Activated T-helper 1 cell treated with anti-CD3 and anti-CD28 coated beads, Interleukin-12 subunit alpha, Interleukin-12 subunit beta, Interleukin-2, Interleukin-4 antibody, amounts not matched to agents 30 ng/mL and 10 ng/mL and 1 ng/mL, durations not matched to agents 14 hours and 24 hours and 36 hours (primary cell): ENCODE measurements at regions of chr13 and their contacts with region 1.

Region 1: GRCh38 chr13:110819203-110820014 is 95.5 kb downstream of the ANKRD10 start:
- DNase-seq: peak; percentile 61
- H3K4me3 Mint-ChIP-seq: no peak overlapping the region
- H3K27ac Mint-ChIP-seq: no peak overlapping the region
- H3K4me1 Mint-ChIP-seq: peaks cover 8% of the 10 kb centered on the region
- H3K27me3 Mint-ChIP-seq: peaks cover 16% of the 10 kb centered on the region

Region 2: GRCh38 chr13:109667807-109668291 is 1151.6 kb before region 1 on chr13:
- intact Hi-C with region 1: no loop called
- DNase-seq: no peak
- H3K4me3 Mint-ChIP-seq: no peak overlapping the region
- H3K27ac Mint-ChIP-seq: no peak overlapping the region
- H3K4me1 Mint-ChIP-seq: no peaks in the 10 kb centered on the region
- H3K27me3 Mint-ChIP-seq: no peaks in the 10 kb centered on the region

Region 3: GRCh38 chr13:110244071-110244830 is 575.2 kb before region 1 on chr13:
- intact Hi-C with region 1: no loop called
- DNase-seq: no peak
- H3K4me3 Mint-ChIP-seq: no peak overlapping the region
- H3K27ac Mint-ChIP-seq: no peak overlapping the region
- H3K4me1 Mint-ChIP-seq: no peaks in the 10 kb centered on the region
- H3K27me3 Mint-ChIP-seq: peaks cover 10% of the 10 kb centered on the region

Region 4: GRCh38 chr13:110455941-110456340 is 363.5 kb before region 1 on chr13:
- intact Hi-C with region 1: loop called (anchors 1 kb)
- DNase-seq: peak; percentile 51
- H3K4me3 Mint-ChIP-seq: peak overlapping the region; percentile 7
- H3K27ac Mint-ChIP-seq: no peak overlapping the region
- H3K4me1 Mint-ChIP-seq: peaks cover 6% of the 10 kb centered on the region
- H3K27me3 Mint-ChIP-seq: peaks cover 16% of the 10 kb centered on the region

Region 5: GRCh38 chr13:110593430-110594130 is 225.8 kb before region 1 on chr13:
- intact Hi-C with region 1: loop called (anchors 1 kb)
- DNase-seq: no peak
- H3K4me3 Mint-ChIP-seq: no peak overlapping the region
- H3K27ac Mint-ChIP-seq: no peak overlapping the region
- H3K4me1 Mint-ChIP-seq: no peaks in the 10 kb centered on the region
- H3K27me3 Mint-ChIP-seq: peaks cover 12% of the 10 kb centered on the region

Region 6: GRCh38 chr13:110644892-110645521 is 174.4 kb before region 1 on chr13:
- intact Hi-C with region 1: loop called (anchors 1 kb)
- DNase-seq: peak; percentile 7
- H3K4me3 Mint-ChIP-seq: no peak overlapping the region
- H3K27ac Mint-ChIP-seq: no peak overlapping the region
- H3K4me1 Mint-ChIP-seq: no peaks in the 10 kb centered on the region
- H3K27me3 Mint-ChIP-seq: no peaks in the 10 kb centered on the region

Region 7: DNA sequence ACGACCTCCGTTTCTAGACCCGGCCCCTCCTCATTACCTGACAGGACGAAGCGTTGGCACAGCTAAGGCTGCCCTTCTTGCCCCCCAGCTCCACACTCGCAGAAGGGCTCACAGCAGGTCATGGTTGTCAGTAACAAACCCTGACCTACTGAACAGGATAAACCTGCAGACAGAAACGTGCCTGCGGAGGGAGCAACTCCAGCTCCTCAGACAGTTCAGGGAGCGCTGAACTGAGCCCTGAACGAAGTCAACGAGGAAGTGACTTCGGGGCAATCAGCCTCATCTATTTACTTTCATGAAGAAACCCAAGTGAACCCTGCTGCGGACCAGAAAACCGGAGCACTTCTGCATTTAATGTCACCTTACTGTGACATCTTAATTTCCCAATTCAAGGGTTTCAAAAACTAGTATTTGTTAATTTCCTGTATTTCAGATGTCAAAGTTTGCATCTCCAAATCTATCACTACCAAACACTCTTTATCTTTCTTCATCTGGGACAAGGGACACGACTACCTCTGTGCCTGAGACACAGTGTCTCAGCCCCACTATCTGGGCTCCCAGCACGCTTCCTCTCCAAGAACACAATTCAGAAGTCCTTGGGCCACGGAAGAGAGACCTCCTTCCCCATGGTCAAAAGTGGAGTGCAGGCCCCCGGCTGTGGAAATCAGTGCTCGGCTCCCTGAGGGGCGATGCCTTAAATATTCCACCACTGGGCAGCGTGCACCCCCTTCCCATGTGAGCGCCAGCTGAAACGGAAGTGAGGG is 153.7 kb before region 1 on chr13:
- intact Hi-C with region 1: no loop called
- DNase-seq: no peak
- H3K4me3 Mint-ChIP-seq: no peak overlapping the region
- H3K27ac Mint-ChIP-seq: no peak overlapping the region
- H3K4me1 Mint-ChIP-seq: peaks cover 2% of the 10 kb centered on the region
- H3K27me3 Mint-ChIP-seq: no peaks in the 10 kb centered on the region

Region 8: DNA sequence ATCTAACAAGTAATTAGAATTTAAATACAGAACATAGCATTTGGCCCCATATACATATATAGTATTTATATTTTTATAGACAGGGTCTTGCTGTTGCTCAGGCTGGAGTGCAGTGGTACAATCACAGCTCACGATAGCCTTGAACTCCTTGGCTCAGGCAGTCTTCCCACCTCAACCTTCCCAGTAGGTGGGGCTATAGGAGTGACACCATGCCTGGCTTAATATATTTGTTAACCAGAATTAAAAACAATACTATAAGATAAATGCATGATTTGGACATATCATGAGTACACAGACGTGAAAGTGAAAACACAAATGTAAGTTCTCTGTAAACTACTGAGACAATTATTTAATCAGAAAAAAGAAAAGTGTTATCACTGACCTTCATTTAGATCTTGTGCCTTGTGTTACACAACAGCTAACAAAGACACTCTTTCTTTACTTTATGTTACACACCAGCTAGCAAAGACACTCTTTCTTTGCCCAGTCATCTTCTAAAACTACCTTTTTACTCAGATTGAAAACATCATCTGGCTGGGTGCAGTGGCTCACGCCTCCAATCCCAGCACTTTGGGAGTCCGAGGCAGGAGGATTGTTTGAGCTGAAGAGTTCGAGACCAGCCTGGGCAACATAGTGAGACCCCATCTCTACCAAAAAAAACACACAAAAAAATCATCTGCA is 136.1 kb before region 1 on chr13:
- intact Hi-C with region 1: loop called (anchors 1 kb)
- DNase-seq: no peak
- H3K4me3 Mint-ChIP-seq: no peak overlapping the region
- H3K27ac Mint-ChIP-seq: no peak overlapping the region
- H3K4me1 Mint-ChIP-seq: no peaks in the 10 kb centered on the region
- H3K27me3 Mint-ChIP-seq: no peaks in the 10 kb centered on the region